Sigmoid colon (tissue), 7 donors: ENCODE measurements at regions of chr15 and their contacts with region 1.

Region 1: GRCh38 chr15:52735231-52736089 is 54.7 kb downstream of the ONECUT1 start:
- DNase-seq: peak; percentile 66
- H3K4me3 ChIP-seq: no peak overlapping the region
- H3K27ac ChIP-seq: no peak overlapping the region
- H3K4me1 ChIP-seq: peaks cover 0 to 4% (median 0%) of the 10 kb centered on the region in 4 donors
- H3K27me3 ChIP-seq: no peaks in the 10 kb centered on the region
- CTCF ChIP-seq: peak; percentile 81 to 85 (median 83)
- EP300 ChIP-seq: no peak
- POLR2A ChIP-seq: no peak

Region 2: DNA sequence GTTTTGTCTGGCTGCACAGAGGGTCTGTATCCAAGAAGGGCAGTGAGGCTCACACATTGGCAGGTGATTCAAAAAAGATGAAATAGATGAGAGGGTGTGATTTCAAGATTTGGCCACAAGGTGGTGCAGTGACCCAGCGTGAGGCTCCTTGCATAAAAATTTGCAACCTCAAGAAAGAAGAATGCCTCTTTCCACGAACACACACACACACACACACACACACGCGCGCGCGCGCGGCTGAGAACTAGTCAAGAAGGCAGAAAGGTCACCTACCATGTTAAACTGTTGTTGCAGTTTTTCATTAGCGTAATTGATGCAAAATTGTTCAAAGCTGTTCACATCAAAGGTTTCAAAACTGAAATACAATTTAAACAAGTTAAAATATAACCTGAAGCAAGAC is 479.1 kb before region 1 on chr15:
- intact Hi-C with region 1: loop called (anchors 1 kb)
- DNase-seq: peak; percentile 82
- H3K4me3 ChIP-seq: no peak overlapping the region
- H3K27ac ChIP-seq: no peak overlapping the region
- H3K4me1 ChIP-seq: peaks cover 0 to 2% (median 1%) of the 10 kb centered on the region in 4 donors
- H3K27me3 ChIP-seq: no peaks in the 10 kb centered on the region
- CTCF ChIP-seq: peak; percentile 26 to 85 (median 74)
- EP300 ChIP-seq: no peak
- POLR2A ChIP-seq: no peak

Region 3: DNA sequence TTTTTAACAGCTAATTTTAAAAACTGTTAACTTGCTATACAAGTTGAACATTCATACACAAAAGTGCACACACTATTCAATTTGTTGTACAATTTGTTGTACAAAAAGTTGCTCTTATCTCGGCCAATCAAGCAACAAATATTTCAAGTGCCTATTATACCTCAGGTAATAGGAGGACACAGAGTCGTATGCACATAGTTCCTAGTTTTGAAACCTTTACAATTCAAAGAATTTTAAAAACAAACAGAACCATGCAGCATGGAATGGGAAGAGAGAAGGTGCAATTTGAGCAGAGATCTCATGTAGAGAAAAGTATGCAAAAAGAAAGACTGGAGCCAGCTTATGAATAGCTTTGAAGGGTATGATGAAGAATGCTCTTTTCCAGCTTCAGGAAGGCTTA is 120.2 kb before region 1 on chr15:
- intact Hi-C with region 1: loop called (anchors 10 kb)
- DNase-seq: no peak
- H3K4me3 ChIP-seq: no peak overlapping the region
- H3K27ac ChIP-seq: no peak overlapping the region
- H3K4me1 ChIP-seq: no peaks in the 10 kb centered on the region
- H3K27me3 ChIP-seq: no peaks in the 10 kb centered on the region
- CTCF ChIP-seq: no peak
- EP300 ChIP-seq: no peak
- POLR2A ChIP-seq: no peak